Activated CD8-positive, alpha-beta memory T cell treated with anti-CD3 and anti-CD28 coated beads, Interleukin-2, amount 10 ng/mL, durations not matched to agents 7 days and 5 days (primary cell): ENCODE measurements at regions of chr9 and their contacts with region 1.

Region 1: DNA sequence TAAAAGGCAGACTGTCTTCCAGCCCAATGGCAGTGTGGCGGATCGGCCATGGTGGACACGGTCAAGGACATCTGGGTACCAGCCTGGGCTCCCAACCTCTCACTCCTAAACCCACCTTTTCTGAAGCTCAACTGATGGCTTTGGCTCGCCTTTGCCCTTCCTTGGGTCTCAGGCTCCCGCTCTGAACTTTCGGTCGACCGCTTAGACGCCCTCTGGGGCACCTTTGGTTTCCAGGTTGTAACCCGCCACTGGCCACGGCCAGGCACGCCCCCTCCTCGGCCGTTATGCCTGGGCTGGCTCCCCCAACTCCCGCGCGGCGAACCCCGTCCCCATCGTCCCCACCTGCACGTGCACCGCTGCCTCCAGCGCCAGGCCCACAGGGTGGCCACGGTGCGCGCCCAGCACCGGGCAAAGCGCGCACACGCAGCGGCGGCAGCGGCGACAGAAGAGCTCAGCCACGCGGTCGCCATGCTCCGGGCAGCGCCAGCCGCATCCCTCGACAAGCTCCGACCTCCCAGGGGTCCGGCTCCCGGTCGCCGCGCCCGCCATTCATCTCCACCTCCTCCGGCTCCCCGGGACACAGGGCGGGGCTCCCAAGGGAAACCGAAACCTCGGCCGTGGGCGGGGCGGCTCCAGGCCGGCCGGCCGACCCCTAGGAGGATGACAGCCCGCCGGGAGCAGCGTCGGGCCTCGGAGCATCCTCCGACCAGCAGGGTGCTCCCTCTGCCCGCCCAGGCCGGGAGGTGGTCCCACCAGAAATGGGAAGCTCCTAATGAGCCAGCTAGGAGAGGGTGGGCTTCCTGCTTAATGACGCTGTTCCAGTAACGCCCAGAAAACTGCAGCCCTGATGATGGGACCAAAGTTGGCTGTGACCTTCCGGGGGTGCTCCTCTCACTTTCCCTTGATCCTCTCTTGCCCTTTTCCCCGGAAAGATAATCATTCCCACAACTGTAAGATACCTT is at the start of gene TRIM14:
- DNase-seq: peak; percentile 82
- ATAC-seq: peak; percentile 82
- H3K4me3 Mint-ChIP-seq: peak within 1 kb of the TSS; percentile 82
- H3K27ac Mint-ChIP-seq: peak within 1 kb of the TSS; percentile 91
- H3K4me1 Mint-ChIP-seq: peaks cover 45% of the 10 kb centered on the region
- H3K27me3 Mint-ChIP-seq: no peaks in the 10 kb centered on the region
- total RNA-seq, gene TRIM14: 84.6 to 128 TPM

Region 2: GRCh38 chr9:98074115-98074990 is 44.6 kb before region 1 on chr9:
- CTCF ChIA-PET with region 1: interaction called, 19 read pairs
- DNase-seq: peak; percentile 76
- ATAC-seq: peak; percentile 37
- H3K4me3 Mint-ChIP-seq: no peak overlapping the region
- H3K27ac Mint-ChIP-seq: peak overlapping the region; percentile 88
- H3K4me1 Mint-ChIP-seq: peaks cover 35% of the 10 kb centered on the region
- H3K27me3 Mint-ChIP-seq: no peaks in the 10 kb centered on the region

Region 3: DNA sequence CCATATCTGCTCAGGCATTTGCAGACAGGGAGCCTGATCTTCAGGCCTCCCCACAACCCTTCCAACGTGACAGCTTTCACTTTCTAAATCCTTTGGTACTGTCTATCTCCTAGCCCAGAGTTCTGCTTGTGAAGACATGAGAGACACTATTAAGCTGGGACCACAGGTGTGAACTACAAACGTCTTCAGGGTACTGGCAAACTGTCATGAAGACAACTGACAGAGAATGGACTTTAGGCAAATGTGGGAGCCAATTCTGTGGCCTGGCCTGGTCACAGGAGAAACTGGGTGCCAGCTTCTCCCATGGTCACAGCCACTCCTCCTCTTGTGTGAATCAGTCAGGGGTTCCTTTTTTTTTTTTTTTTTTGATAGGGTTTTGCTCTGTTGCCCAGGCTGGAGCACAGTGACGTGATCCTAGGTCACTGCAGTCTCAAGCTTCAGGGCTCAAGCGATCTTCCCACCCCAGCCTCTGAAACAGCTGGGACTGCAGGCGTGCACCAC is 10.3 kb before region 1 on chr9:
- CTCF ChIA-PET with region 1: interaction called, 41 read pairs
- DNase-seq: peak; percentile 61
- ATAC-seq: peak; percentile 83
- H3K4me3 Mint-ChIP-seq: peak overlapping the region; percentile 39
- H3K27ac Mint-ChIP-seq: peak overlapping the region; percentile 90
- H3K4me1 Mint-ChIP-seq: peaks cover 83% of the 10 kb centered on the region
- H3K27me3 Mint-ChIP-seq: no peaks in the 10 kb centered on the region

Region 4: DNA sequence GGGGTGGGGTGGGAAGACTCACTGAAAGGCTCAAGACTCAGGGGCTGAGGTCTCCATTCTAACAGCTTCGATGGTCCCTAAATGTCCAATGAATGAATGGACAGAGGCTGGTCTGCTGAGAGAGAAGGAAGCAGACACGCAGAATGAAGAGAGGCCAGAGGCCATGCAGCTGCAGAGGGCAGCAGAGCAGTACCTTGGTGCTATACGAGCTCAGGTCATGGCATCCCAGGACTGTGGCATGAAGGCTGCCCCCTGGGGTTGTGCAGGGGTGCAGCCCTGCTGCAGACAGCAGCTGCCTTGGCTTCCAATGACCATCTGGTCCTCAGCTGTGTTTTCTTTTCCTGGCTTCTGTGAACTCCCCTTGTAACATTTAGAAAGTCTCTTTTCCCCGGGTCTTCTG is 88.7 kb after region 1 on chr9:
- CTCF ChIA-PET with region 1: interaction called, 13 read pairs
- DNase-seq: no peak
- ATAC-seq: no peak
- H3K4me3 Mint-ChIP-seq: no peak overlapping the region
- H3K27ac Mint-ChIP-seq: no peak overlapping the region
- H3K4me1 Mint-ChIP-seq: peaks cover 4% of the 10 kb centered on the region
- H3K27me3 Mint-ChIP-seq: no peaks in the 10 kb centered on the region

Region 5: GRCh38 chr9:98263482-98264357 is 144.8 kb after region 1 on chr9:
- CTCF ChIA-PET with region 1: interaction called, 12 read pairs
- DNase-seq: peak; percentile 92
- ATAC-seq: peak; percentile 100
- H3K4me3 Mint-ChIP-seq: no peak overlapping the region
- H3K27ac Mint-ChIP-seq: no peak overlapping the region
- H3K4me1 Mint-ChIP-seq: peaks cover 5% of the 10 kb centered on the region
- H3K27me3 Mint-ChIP-seq: peaks cover 16% of the 10 kb centered on the region